B cell (primary cell): ENCODE measurements at regions of chr14 and their contacts with region 1.

Region 1: DNA sequence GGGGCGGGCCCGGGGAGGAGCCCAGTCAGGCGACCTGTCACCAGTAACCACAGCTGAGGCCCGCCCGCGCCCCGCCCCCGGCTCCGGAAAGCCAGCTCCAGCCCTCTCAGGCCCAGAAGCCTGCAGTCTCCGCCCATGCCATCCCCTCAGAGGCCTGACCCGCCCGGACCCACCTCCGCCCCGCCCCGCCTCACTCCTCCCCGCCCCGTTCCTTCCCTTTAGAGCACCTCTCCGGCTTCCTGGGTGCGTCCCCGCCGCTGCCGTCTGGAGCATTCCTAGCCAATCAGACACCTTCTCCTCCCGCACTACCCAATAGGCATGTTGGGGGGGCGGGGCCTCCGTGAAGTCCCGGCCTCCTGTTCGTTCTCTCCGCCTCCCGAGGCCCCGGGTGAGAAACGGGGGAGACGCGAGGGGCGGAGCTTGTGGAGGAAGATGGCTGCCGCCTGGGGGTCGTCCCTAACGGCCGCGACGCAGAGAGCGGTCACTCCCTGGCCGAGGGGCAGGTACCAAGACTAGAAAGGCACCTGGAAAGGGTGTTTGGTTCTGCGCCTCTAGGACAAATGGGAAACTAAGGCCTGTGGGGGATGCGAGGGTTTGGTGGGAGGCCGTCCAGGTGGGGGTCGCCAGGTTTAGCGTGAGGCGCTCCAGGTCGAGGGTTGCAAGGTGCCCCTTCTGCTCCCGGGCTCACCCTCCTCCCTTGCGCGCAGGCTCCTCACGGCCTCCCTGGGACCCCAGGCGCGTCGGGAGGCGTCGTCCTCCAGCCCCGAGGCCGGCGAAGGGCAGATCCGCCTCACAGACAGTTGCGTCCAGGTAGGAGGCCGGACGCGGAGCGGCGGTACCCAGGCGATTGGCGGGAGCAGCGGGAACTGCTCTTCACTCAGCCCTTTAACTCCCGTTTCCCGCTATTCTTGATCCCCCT is at the start of gene ISCA2:
- DNase-seq: peak; percentile 99
- ATAC-seq: peak; percentile 89
- H3K4me3 ChIP-seq: peak within 1 kb of the TSS; percentile 87 to 98 (median 94)
- H3K4me3 Mint-ChIP-seq: no peak within 1 kb of the TSS
- H3K27ac ChIP-seq: peak within 1 kb of the TSS; percentile 74 to 97
- H3K27ac Mint-ChIP-seq: peak within 1 kb of the TSS; percentile 83
- H3K4me1 ChIP-seq: peaks cover 18 to 27% of the 10 kb centered on the region in 2 donors
- H3K4me1 Mint-ChIP-seq: peaks cover 33% of the 10 kb centered on the region
- H3K27me3 ChIP-seq: no peaks in the 10 kb centered on the region
- H3K27me3 Mint-ChIP-seq: no peaks in the 10 kb centered on the region
- CTCF ChIP-seq: no peak
- total RNA-seq, gene ISCA2: 28.3 and 30.0 TPM in 2 replicates

Region 2: DNA sequence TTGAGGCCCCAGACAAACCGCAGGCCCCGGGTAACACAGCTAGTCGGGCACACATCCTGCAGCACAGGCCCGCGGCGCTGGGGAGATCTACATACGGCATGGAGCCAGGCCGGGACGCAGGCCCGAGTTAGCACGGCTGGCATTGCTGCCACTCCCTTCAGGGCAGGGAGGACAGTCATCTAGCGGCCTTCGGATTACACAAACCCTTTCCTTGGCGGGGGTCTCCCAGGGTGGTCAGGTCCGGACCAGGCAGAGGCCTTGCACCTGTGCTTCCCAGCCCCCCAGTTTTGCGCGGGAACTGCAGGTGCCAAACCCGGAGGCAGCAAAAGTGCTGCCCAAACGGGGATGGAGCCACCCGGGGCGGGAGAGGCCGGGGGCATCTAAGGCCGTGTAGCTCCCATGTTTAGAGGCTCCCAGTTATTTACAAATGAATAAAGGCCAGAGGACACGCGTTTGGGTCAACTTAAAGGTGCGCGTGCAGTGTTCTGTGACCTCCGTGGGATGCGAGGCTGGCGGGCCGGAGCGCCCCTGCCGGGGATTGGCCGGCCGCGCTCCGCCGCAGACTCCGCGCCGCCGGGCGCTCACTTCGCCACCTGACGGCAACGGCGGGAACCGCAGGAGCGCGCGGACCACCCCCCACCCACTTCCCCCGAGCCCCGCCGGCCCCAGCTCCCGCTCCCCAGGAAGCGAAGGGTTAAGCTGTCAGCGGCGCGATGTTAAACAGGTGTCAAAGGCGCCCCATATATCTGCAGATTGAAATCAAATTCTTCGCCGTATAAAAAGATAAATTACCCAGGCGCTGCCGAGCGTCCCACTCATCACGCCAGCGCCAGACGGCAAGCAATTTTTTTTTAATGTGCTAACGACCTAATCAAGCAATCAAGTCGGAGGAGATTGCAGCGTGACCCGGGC is 236.3 kb before region 1 on chr14:
- CTCF ChIA-PET with region 1: no interaction called
- POLR2A ChIA-PET with region 1: no interaction called
- intact Hi-C with region 1: loop called (anchors 5 kb)
- DNase-seq: peak; percentile 80
- ATAC-seq: peak; percentile 97
- H3K4me3 ChIP-seq: peak overlapping the region; percentile 38 to 72 (median 61)
- H3K4me3 Mint-ChIP-seq: peak overlapping the region; percentile 83
- H3K27ac ChIP-seq: no peak overlapping the region
- H3K27ac Mint-ChIP-seq: no peak overlapping the region
- H3K4me1 ChIP-seq: peaks cover 17% of the 10 kb centered on the region in 2 donors
- H3K4me1 Mint-ChIP-seq: peaks cover 6% of the 10 kb centered on the region
- H3K27me3 ChIP-seq: peaks cover 0 to 23% (median 8%) of the 10 kb centered on the region in 4 experiments
- H3K27me3 Mint-ChIP-seq: peaks cover 13% of the 10 kb centered on the region
- CTCF ChIP-seq: peak; percentile 100

Region 3: DNA sequence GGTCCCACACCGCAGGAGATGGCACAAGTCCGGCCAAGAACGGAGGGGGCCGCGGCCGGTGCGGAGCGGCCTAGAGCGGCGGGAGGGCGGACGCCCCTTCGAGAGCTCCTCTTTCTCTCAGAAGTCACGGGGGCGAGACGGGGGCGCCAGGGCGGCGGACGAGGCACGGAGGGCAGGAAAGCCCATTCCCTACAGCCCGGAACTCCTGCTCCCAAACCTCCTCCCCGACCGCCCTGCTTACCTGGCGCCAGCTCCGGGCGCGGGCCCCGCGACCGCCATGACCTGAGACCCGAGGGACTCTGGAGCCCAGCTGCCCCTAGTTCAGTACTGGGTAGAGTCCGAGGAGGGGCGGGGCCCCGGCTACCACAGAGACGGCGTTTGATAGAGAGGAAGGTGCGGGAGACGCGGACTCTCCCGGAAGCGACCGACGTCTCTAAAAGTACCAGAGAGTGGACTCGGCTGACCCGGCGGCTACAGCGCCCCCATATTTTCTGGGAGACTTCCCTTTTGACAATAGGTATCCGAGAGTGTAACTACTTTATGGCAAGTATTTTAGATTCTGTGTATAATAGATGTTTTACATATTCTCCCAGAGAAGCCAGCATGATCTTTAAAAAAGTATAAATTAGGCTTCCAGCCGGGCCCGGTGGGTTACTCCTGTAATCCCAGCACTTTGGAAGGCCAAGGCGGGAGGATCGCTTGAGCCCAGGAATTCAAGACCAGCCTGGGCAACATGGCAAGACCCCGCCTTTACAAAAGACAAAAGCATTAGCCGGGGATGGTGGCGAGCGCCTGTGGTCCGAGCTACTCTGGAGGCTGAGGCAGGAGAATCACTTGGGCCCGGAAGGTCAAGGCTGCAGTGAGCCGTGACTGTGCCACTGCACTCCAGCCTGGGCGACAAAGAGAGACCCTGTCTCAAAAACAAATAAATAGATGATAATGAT is 190.7 kb before region 1 on chr14 and contains the start of gene ABCD4:
- CTCF ChIA-PET with region 1: no interaction called
- POLR2A ChIA-PET with region 1: no interaction called
- intact Hi-C with region 1: loop called (anchors 1 kb)
- DNase-seq: peak; percentile 90
- ATAC-seq: peak; percentile 98
- H3K4me3 ChIP-seq: peak within 1 kb of the TSS; percentile 69 to 96 (median 86)
- H3K4me3 Mint-ChIP-seq: peak within 1 kb of the TSS; percentile 95
- H3K27ac ChIP-seq: peak within 1 kb of the TSS; percentile 69 to 81
- H3K27ac Mint-ChIP-seq: peak within 1 kb of the TSS; percentile 88
- H3K4me1 ChIP-seq: peaks cover 11 to 14% of the 10 kb centered on the region in 2 donors
- H3K4me1 Mint-ChIP-seq: peaks cover 23% of the 10 kb centered on the region
- H3K27me3 ChIP-seq: no peaks in the 10 kb centered on the region
- H3K27me3 Mint-ChIP-seq: no peaks in the 10 kb centered on the region
- CTCF ChIP-seq: peak; percentile 59
- total RNA-seq, gene ABCD4: 119 and 125 TPM in 2 replicates

Region 4: DNA sequence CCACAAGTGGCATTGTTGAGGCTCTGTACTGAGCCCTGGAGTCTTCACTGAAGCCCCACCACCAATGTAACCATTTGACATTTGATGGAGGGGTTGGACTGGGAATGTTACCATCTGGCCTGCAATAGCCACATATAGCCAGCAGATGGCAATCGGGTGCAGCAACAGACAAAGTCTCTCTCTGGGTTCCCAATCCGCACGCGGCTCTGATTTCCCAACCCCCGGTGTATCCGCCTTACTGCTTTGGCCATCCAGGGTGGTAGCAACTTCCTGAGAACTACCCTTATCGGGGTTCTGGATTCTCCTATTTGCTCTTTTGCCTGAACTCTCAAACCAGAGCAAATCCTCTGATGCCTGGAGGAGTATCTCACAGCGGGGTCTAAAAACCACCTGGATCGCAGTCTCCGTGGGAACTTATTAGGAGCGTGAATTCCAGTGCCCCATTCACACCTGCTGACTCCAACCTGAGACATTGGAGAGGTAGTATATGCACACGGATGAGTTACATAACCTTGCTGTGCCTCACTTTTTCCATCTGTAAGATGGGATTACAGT is 131.2 kb before region 1 on chr14:
- CTCF ChIA-PET with region 1: interaction called, 15 read pairs
- POLR2A ChIA-PET with region 1: interaction called, 3 read pairs
- intact Hi-C with region 1: loop called (anchors 1 kb)
- DNase-seq: peak; percentile 79
- ATAC-seq: peak; percentile 88
- H3K4me3 ChIP-seq: no peak overlapping the region
- H3K4me3 Mint-ChIP-seq: no peak overlapping the region
- H3K27ac ChIP-seq: no peak overlapping the region
- H3K27ac Mint-ChIP-seq: no peak overlapping the region
- H3K4me1 ChIP-seq: peaks cover 4 to 5% of the 10 kb centered on the region in 2 donors
- H3K4me1 Mint-ChIP-seq: no peaks in the 10 kb centered on the region
- H3K27me3 ChIP-seq: peaks cover 0 to 3% (median 0%) of the 10 kb centered on the region in 4 experiments
- H3K27me3 Mint-ChIP-seq: peaks cover 6% of the 10 kb centered on the region
- CTCF ChIP-seq: peak; percentile 99

Region 5: DNA sequence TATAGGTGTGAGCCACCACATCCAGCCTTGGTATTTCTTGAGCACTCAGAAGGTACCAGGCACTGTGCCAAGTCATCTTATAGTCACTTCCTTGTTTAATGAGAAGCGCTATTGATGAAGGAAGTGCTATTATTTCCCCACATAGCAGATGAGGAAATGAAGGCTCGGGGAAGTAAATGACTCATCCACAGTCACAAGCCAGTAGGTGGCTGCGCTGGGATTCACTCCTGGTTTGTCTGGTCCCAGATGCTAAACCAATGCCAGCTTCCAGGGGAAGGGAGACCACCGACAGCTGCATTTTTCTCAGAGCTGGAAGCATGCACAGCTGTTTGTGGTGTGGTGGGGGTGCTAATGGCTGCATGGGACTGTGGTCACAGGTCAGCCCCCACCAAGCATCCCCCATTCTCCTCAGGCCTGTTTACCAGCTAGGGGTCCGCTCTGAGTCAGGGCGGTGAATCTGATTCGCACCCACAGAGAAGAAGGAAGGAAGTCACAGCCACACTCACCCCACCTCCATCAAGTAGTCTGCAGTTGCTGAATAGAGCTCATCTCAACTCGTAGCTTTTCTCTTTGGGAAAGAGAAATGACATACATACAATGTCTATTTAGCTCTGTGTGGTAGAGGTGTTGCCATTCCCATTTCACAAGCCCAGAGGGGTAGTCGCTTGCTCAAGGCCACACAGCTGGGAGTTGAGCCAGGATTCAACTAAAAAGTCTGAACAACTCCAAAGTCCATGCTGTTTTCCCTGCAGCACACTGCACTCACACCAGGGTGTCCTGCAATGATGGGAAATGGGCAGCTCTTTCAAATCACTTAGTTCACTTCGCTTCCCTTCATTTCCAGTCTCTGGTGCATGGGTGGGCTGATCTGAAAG is 124.7 kb after region 1 on chr14:
- CTCF ChIA-PET with region 1: interaction called, 3 read pairs
- POLR2A ChIA-PET with region 1: no interaction called
- intact Hi-C with region 1: loop called (anchors 1 kb)
- DNase-seq: peak; percentile 82
- ATAC-seq: peak; percentile 74
- H3K4me3 ChIP-seq: peak overlapping the region in 4 of 5 experiments; percentile 34 to 64 (median 44)
- H3K4me3 Mint-ChIP-seq: peak overlapping the region; percentile 73
- H3K27ac ChIP-seq: peak overlapping the region; percentile 77 to 79
- H3K27ac Mint-ChIP-seq: peak overlapping the region; percentile 76
- H3K4me1 ChIP-seq: peaks cover 36 to 39% of the 10 kb centered on the region in 2 donors
- H3K4me1 Mint-ChIP-seq: peaks cover 55% of the 10 kb centered on the region
- H3K27me3 ChIP-seq: peaks cover 0 to 6% (median 0%) of the 10 kb centered on the region in 4 experiments
- H3K27me3 Mint-ChIP-seq: peaks cover 13% of the 10 kb centered on the region
- CTCF ChIP-seq: no peak

Region 6: DNA sequence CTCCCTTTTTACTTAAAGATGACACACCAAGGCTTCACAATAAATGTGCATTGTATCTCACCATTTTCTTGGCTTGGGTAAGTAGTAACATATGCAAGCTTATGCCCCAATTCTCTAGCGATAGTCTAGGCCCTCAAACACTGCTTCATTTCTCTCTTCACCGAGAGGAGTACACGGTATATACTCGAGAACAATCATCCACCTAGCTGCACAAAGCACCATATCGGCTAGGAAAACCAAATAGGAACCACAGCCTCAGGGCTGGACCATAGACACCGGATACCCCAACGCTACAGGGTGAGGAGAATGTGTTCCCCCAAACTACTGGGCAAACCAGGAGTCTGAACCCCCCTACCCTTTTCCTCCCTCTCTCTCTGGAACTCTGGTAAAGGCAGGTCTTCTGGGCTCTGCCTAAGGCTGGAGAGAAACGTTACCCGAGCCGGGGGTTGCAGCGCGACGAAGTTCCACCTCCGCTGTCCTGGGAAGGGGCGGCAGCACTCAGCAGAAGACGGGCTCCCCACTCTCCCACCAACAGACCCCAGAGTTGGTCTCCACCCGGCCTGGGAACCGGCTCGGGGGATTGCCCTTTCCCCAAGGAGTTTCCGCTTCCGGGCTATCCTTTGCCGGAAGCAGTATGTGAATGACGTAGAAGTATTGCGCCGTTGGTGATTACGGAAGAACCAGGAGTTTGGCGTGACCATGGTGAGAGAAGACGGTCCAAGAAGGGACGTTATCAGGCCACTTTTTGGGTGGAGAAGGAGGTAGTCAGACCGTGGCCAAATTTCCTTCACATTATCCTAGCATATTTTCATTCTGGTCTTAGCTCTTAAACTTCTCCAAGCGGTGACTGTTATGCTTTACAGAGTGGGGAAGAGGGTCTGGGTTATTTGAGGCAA is 219.1 kb after region 1 on chr14 and contains the starts of genes AREL1 and FCF1:
- CTCF ChIA-PET with region 1: no interaction called
- POLR2A ChIA-PET with region 1: no interaction called
- intact Hi-C with region 1: loop called (anchors 1 kb)
- DNase-seq: peak; percentile 91
- ATAC-seq: peak; percentile 94
- H3K4me3 ChIP-seq: peak within 1 kb of the TSS; percentile 64 to 97 (median 87)
- H3K4me3 Mint-ChIP-seq: peak within 1 kb of the TSS; percentile 88
- H3K27ac ChIP-seq: peak within 1 kb of the TSS; percentile 83 to 90
- H3K27ac Mint-ChIP-seq: peak within 1 kb of the TSS; percentile 85
- H3K4me1 ChIP-seq: peaks cover 18 to 20% of the 10 kb centered on the region in 2 donors
- H3K4me1 Mint-ChIP-seq: peaks cover 38% of the 10 kb centered on the region
- H3K27me3 ChIP-seq: no peaks in the 10 kb centered on the region
- H3K27me3 Mint-ChIP-seq: no peaks in the 10 kb centered on the region
- CTCF ChIP-seq: no peak
- total RNA-seq, gene AREL1: 39.4 and 44.4 TPM in 2 replicates
- total RNA-seq, gene FCF1: 40.6 and 41.6 TPM in 2 replicates

Region 7: DNA sequence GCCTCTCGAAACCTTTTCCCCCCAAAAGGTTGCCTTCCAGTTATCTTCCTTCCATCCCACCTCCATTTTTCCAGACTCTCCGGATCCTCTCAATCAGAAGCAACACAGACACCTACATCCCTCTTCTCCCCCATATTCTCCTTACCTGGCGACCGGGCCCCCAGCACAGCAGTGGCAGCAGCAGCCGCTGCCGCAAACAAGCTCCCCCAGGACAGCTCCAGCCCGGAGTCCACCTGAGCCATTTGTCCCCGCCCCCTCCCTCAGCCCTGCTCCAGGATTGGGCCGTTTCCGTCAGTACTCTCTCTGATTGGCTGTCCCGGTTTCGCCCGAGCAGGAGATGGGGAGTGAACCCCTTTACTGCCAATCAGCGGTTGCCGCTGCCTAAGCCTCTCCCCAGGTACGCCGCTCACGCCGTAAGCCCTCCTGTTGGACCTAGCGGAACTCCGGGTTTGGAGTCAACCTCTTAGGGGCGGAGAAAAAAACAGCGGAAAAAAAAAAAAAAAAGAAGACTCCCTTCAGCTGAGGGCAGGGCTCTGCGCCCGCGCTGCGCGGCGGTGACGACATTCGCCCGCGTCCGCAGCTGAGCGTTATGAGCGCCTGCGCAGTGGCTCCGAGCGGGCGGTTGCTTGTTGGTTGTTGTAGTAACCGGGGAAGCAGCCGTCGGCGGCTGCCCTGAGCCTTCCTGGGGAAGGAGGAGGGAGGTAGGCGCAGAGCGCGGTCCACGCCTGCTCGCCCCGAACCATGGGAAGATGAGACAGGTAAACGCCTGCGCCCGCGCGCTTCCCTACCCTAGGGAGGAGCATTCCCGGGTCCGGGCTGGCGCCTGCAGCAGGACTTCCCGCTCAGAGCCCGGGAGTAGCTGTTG is 1167.3 kb after region 1 on chr14 and contains the starts of genes ERG28 and TTLL5:
- CTCF ChIA-PET with region 1: no interaction called
- POLR2A ChIA-PET with region 1: no interaction called
- intact Hi-C with region 1: loop called (anchors 2 kb)
- DNase-seq: peak; percentile 98
- ATAC-seq: peak; percentile 94
- H3K4me3 ChIP-seq: peak within 1 kb of the TSS; percentile 73 to 95 (median 85)
- H3K4me3 Mint-ChIP-seq: peak within 1 kb of the TSS; percentile 95
- H3K27ac ChIP-seq: peak within 1 kb of the TSS; percentile 80 to 96
- H3K27ac Mint-ChIP-seq: peak within 1 kb of the TSS; percentile 96
- H3K4me1 ChIP-seq: peaks cover 14 to 15% of the 10 kb centered on the region in 2 donors
- H3K4me1 Mint-ChIP-seq: peaks cover 27% of the 10 kb centered on the region
- H3K27me3 ChIP-seq: no peaks in the 10 kb centered on the region
- H3K27me3 Mint-ChIP-seq: no peaks in the 10 kb centered on the region
- CTCF ChIP-seq: no peak
- total RNA-seq, gene ERG28: 11.7 and 13.7 TPM in 2 replicates
- total RNA-seq, gene TTLL5: 47.0 and 50.9 TPM in 2 replicates